Activated B cell treated with CpG ODN at 0.5 μM for 24 hours (primary cell): ENCODE measurements at regions of chr5 and their contacts with region 1.

Region 1: DNA sequence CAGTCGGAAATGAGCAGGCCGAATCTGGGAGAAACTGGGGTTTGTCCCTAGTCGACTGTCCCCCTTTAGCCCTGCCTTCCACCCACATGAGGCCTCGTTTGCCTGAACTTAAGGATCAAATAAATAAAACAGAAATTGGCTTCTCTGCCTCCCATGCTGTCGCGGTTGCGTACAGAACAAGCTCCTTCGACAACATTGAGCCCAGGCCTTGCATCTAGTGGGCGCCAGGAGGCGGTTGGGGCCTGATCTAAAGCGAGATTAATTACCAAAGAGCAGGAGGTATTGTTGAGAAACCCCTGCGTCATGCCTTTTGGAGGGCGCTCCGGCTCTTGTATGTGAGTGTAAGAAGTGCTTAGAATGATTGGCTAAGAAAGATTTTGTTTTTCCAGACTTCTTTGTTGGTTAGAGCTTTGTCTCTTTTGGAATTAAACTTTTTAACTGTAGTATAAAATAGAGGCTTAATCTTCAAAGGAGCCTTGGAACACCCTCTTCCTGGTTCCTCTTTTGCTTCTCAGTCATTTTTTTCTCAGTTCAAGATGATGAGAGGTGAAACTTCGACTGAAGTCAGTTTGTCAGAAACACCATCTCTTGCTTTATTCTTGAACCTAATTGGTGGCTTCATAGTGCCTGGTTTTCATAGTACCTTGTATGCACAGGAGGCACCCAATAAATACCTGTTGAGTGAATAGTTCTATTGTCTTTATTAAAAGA is 827 bp downstream of the ATP6V0E1 start:
- DNase-seq: peak; percentile 48
- ATAC-seq: peak; percentile 67
- H3K4me3 Mint-ChIP-seq: peak overlapping the region; percentile 98
- H3K27ac Mint-ChIP-seq: peak overlapping the region; percentile 96
- H3K4me1 Mint-ChIP-seq: peaks cover 44% of the 10 kb centered on the region
- H3K27me3 Mint-ChIP-seq: no peaks in the 10 kb centered on the region
- CTCF ChIP-seq: no peak

Region 2: GRCh38 chr5:172994405-172994804 is 10.0 kb after region 1 on chr5:
- CTCF ChIA-PET with region 1: interaction called, 6 read pairs
- POLR2A ChIA-PET with region 1: interaction called, 10 read pairs
- intact Hi-C with region 1: no loop called
- DNase-seq: no peak
- ATAC-seq: no peak
- H3K4me3 Mint-ChIP-seq: no peak overlapping the region
- H3K27ac Mint-ChIP-seq: no peak overlapping the region
- H3K4me1 Mint-ChIP-seq: peaks cover 21% of the 10 kb centered on the region
- H3K27me3 Mint-ChIP-seq: no peaks in the 10 kb centered on the region
- CTCF ChIP-seq: no peak

Region 3: GRCh38 chr5:173016621-173017047 is 32.2 kb after region 1 on chr5:
- CTCF ChIA-PET with region 1: no interaction called
- POLR2A ChIA-PET with region 1: interaction called, 10 read pairs
- intact Hi-C with region 1: no loop called
- DNase-seq: no peak
- ATAC-seq: peak; percentile 34
- H3K4me3 Mint-ChIP-seq: no peak overlapping the region
- H3K27ac Mint-ChIP-seq: peak overlapping the region; percentile 67
- H3K4me1 Mint-ChIP-seq: peaks cover 41% of the 10 kb centered on the region
- H3K27me3 Mint-ChIP-seq: no peaks in the 10 kb centered on the region
- CTCF ChIP-seq: no peak

Region 4: DNA sequence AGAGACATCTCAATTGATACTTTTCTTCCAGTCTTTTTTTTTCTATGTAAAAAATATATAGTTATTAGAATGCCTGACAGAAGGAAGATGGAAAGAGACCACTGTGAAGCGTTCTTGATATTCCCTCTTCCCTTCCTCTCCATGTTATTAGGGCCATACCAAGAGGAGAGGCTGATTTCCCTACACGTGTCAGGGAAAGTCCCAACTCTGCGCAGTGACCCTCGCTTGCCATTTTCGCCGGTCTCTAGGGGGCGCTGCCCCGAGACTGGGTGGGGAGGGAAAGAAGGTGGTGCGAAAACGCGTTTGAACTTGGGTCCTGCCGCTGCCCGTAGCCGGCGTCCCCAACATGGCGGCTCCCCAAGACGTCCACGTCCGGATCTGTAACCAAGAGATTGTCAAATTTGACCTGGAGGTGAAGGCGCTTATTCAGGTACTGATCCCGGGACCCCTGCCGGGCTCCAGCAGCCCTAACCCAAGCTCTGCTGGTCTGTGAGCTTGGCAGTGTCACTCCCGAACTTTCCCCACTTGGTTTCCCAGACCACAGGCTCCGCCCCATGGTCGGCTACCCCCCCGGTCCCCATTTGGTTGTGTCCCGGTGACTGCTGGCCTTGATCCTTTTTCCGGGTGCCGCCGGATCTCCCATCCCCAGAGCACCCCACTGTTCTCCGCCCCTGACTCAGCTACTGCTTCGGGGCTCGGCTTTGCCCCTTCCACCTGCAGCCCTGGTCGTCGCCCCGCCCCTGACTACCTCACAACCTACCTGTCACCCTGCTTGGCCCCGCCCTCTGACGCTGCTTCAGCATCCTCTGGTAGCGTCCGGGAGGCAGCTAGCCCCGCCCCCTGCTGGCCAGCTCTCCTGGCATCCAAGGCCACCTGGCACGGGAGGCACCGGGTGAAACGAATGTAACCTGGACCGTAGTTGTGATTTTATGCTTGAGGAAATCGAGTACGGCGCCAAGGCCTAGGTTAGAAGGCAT is 160.1 kb after region 1 on chr5 and contains the start of gene BNIP1:
- CTCF ChIA-PET with region 1: interaction called, 15 read pairs
- POLR2A ChIA-PET with region 1: interaction called, 46 read pairs
- intact Hi-C with region 1: loop called (anchors 1 kb)
- DNase-seq: peak; percentile 97
- ATAC-seq: peak; percentile 90
- H3K4me3 Mint-ChIP-seq: peak within 1 kb of the TSS; percentile 99
- H3K27ac Mint-ChIP-seq: peak within 1 kb of the TSS; percentile 97
- H3K4me1 Mint-ChIP-seq: peaks cover 12% of the 10 kb centered on the region
- H3K27me3 Mint-ChIP-seq: no peaks in the 10 kb centered on the region
- CTCF ChIP-seq: peak; percentile 54
- total RNA-seq, gene BNIP1: 17.9 and 20.2 TPM in 2 replicates

Region 5: GRCh38 chr5:173283318-173284288 is 299.2 kb after region 1 on chr5:
- CTCF ChIA-PET with region 1: no interaction called
- POLR2A ChIA-PET with region 1: no interaction called
- intact Hi-C with region 1: loop called (anchors 2 kb)
- DNase-seq: peak; percentile 29
- ATAC-seq: peak; percentile 89
- H3K4me3 Mint-ChIP-seq: no peak overlapping the region
- H3K27ac Mint-ChIP-seq: no peak overlapping the region
- H3K4me1 Mint-ChIP-seq: peaks cover 9% of the 10 kb centered on the region
- H3K27me3 Mint-ChIP-seq: peaks cover 60% of the 10 kb centered on the region
- CTCF ChIP-seq: no peak